H1 (cell line): ENCODE measurements at regions of chr6 and their contacts with region 1.

Region 1: DNA sequence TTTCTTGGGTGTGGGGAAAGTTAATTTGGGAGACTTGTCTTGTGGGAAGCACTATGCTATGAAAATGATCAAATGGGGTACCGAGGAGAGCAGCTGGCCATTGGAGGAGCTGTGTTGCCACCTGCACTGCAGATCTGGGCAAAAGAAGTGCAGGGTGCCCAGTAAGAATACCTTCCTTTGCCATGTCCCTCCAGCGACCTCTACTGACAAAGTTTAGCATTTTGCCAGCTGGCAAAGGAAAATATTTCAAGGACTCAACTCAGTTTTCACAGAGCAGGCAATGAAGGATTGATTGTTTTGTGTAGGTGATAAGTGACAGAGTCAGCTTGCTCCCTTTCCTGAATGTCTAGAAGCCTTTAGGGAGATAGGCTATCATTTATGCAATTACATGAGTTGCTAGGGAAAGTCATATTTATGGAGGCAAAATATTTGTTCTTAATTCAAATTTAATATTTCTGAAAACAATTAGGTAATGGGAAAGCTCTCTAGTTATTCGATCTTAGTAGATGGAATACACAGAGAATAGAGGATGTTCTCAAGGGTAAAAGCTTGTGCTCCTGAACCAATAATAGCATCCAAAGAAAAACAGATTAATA is 118.4 kb downstream of the FARS2 start:
- DNase-seq: peak; percentile 21 to 64
- H3K4me3 ChIP-seq: no peak overlapping the region
- H3K27ac ChIP-seq: no peak overlapping the region
- H3K4me1 ChIP-seq: peaks cover 0 to 6% (median 4%) of the 10 kb centered on the region in 4 experiments; a peak in 5 of 7 replicates
- H3K27me3 ChIP-seq: no peaks in the 10 kb centered on the region
- CTCF ChIP-seq: peak in 2 of 3 experiments; percentile 80 to 92; a peak in 3 of 4 replicates
- EP300 ChIP-seq: no peak
- POLR2A ChIP-seq: no peak
- RAD21 ChIP-seq: peak; percentile 89 to 93

Region 2: GRCh38 chr6:5214570-5215052 is 165.1 kb before region 1 on chr6:
- CTCF ChIA-PET with region 1: interaction called, 129 read pairs
- POLR2A ChIA-PET with region 1: no interaction called
- DNase-seq: peak; percentile 41 to 90
- H3K4me3 ChIP-seq: no peak overlapping the region
- H3K27ac ChIP-seq: no peak overlapping the region
- H3K4me1 ChIP-seq: 0 out of 7 replicates have a peak, but pooled peaks cover 0 to 2% (median 0%) of the 10 kb centered on the region in 4 experiments
- H3K27me3 ChIP-seq: no peaks in the 10 kb centered on the region
- CTCF ChIP-seq: peak; percentile 96 to 100 (median 98)
- EP300 ChIP-seq: no peak
- POLR2A ChIP-seq: no peak
- RAD21 ChIP-seq: peak; percentile 98 to 99

Region 3: GRCh38 chr6:5302995-5303622 is 76.6 kb before region 1 on chr6:
- CTCF ChIA-PET with region 1: interaction called, 18 read pairs
- POLR2A ChIA-PET with region 1: no interaction called
- DNase-seq: peak in 1 of 2 experiments; percentile 68
- H3K4me3 ChIP-seq: no peak overlapping the region
- H3K27ac ChIP-seq: no peak overlapping the region
- H3K4me1 ChIP-seq: no peaks in the 10 kb centered on the region; a peak in 1 of 7 replicates
- H3K27me3 ChIP-seq: no peaks in the 10 kb centered on the region
- CTCF ChIP-seq: peak; percentile 72 to 97 (median 93)
- EP300 ChIP-seq: no peak
- POLR2A ChIP-seq: no peak
- RAD21 ChIP-seq: peak; percentile 69 to 74

Region 4: GRCh38 chr6:5395719-5396118 is 16.0 kb after region 1 on chr6:
- CTCF ChIA-PET with region 1: interaction called, 30 read pairs
- POLR2A ChIA-PET with region 1: no interaction called
- DNase-seq: no peak
- H3K4me3 ChIP-seq: no peak overlapping the region
- H3K27ac ChIP-seq: no peak overlapping the region
- H3K4me1 ChIP-seq: no peaks in the 10 kb centered on the region
- H3K27me3 ChIP-seq: no peaks in the 10 kb centered on the region
- CTCF ChIP-seq: no peak
- EP300 ChIP-seq: no peak
- POLR2A ChIP-seq: no peak
- RAD21 ChIP-seq: no peak